ENCODE measurements at regions of chr2 and their contacts with region 1.

Region 1: DNA sequence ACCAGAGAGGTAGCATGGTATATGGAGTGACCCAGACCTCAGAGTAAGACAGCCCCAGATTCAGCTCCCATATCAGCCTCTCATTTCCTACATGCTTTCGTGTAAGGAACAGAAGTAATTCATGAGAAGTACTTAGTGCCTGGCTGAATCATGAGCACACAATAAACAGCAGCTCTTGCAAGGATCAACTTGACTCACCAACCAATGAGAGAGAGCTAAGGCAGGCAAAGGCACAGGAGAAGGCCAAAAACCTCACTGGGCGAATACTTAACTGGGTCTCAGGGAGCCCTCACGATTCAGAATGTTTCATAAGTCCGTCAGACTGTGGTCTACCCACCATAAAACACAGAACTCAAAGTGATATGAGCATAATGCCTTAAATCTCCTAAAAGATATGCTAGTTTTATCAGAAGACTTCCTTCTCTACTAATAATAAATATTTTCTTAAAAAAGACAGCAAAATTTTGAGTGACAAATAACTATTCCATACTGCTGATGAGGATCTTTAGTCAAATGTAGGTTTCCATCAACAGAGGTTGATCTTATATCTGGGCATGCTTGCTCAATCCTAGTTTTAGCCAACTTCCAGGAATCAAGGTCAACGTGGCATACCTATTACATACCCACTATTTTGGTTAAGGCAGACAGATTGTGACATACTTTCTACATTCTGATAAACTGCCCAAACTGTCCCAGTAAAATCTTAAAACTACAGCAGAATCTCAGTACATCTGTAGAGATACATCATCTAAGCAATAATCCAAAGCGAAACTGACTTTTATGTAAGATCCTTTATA is 34.9 kb downstream of the IMMT start:
- DNase-seq: no peak
- ATAC-seq: peak in 3 of 4 donors; percentile 36 to 57 (median 50)
- H3K4me3 ChIP-seq: no peak overlapping the region
- H3K27ac ChIP-seq: no peak overlapping the region
- H3K4me1 ChIP-seq: no peaks in the 10 kb centered on the region
- H3K27me3 ChIP-seq: no peaks in the 10 kb centered on the region
- CTCF ChIP-seq: no peak

Region 2: DNA sequence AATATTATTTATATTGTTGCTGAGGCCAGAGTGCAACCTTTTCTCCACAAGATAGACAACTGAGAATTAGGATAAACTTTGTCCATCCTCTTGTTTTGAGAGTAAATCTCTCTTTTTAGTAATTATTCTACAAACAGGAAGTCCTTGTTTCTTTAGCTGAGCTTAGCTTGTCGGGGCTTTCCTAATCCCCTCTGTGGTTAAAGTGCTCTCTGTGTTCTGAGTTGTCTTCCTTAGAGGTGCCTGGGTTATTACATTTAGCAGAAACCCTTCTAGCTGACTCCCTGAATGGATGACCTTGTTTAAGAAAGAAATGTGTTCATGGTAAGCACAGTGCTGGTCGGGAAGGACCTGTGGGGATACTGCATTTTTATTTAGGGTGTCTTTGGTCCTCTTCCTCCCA is 531.7 kb before region 1 on chr2:
- intact Hi-C with region 1: loop called in 1 of 2 experiments (anchors 10 kb)
- DNase-seq: no peak
- ATAC-seq: no peak
- H3K4me3 ChIP-seq: no peak overlapping the region
- H3K27ac ChIP-seq: no peak overlapping the region
- H3K4me1 ChIP-seq: no peaks in the 10 kb centered on the region
- H3K27me3 ChIP-seq: no peaks in the 10 kb centered on the region
- CTCF ChIP-seq: no peak

Region 3: DNA sequence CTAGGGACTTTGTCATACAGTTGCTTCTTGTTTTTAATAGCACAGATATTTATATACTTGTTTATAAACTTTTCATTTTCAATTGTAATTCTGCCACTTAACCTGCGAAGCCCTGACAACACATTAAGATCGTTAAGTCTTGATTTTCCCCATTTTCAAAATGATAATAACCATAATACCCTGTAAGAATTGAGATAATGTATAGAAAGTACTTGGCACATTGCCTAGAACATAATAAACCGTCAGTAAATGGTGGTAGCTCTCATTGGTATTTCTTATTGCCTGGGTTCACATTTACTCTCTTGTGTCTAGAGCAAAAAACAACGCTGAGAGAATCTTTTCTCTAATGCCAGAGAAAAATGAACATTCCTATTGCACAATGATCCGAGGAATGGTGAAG is 35.7 kb before region 1 on chr2:
- intact Hi-C with region 1: loop called (anchors 5 kb)
- DNase-seq: no peak
- ATAC-seq: no peak
- H3K4me3 ChIP-seq: no peak overlapping the region
- H3K27ac ChIP-seq: no peak overlapping the region
- H3K4me1 ChIP-seq: no peaks in the 10 kb centered on the region
- H3K27me3 ChIP-seq: no peaks in the 10 kb centered on the region
- CTCF ChIP-seq: no peak

Region 4: GRCh38 chr2:86808315-86809161 is 648.2 kb after region 1 on chr2:
- intact Hi-C with region 1: no loop called
- DNase-seq: peak; percentile 87 to 92
- ATAC-seq: peak; percentile 96 to 99 (median 98)
- H3K4me3 ChIP-seq: peak overlapping the region; percentile 64
- H3K27ac ChIP-seq: no peak overlapping the region
- H3K4me1 ChIP-seq: peaks cover 4% of the 10 kb centered on the region
- H3K27me3 ChIP-seq: peaks cover 0 to 35% (median 4%) of the 10 kb centered on the region in 3 donors
- CTCF ChIP-seq: peak; percentile 92